Activated CD4-positive, alpha-beta T cell treated with anti-CD3 and anti-CD28 coated beads for 36 hours (primary cell): ENCODE measurements at regions of chr3 and their contacts with region 1.

Region 1: DNA sequence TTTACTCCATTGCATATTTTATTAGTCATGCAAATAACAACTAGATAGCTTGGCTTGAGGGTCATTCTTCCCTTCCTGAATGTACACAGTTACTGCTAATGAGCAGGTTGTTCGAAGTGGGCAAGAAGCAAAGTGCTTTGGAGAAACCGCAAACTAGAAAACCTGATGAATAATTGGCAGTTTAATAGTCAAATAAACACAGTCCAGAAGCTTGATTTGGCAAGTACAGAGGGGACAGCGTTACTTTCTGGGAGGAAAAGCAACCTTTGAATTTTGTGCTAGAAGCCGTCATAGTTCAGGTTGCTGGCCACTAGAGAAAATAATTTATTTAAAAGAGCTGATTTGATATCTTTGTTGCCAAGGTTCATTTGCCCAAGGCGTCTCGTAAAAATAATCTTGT is 94.9 kb downstream of the MFSD1 start:
- DNase-seq: no peak
- ATAC-seq: no peak
- H3K4me3 Mint-ChIP-seq: no peak overlapping the region
- H3K27ac Mint-ChIP-seq: no peak overlapping the region
- H3K4me1 Mint-ChIP-seq: no peaks in the 10 kb centered on the region
- H3K27me3 Mint-ChIP-seq: no peaks in the 10 kb centered on the region

Region 2: GRCh38 chr3:158260392-158260791 is 636.3 kb before region 1 on chr3:
- CTCF ChIA-PET with region 1: no interaction called
- POLR2A ChIA-PET with region 1: no interaction called
- intact Hi-C with region 1: no loop called
- DNase-seq: no peak
- ATAC-seq: no peak
- H3K4me3 Mint-ChIP-seq: no peak overlapping the region
- H3K27ac Mint-ChIP-seq: no peak overlapping the region
- H3K4me1 Mint-ChIP-seq: no peaks in the 10 kb centered on the region
- H3K27me3 Mint-ChIP-seq: no peaks in the 10 kb centered on the region

Region 3: GRCh38 chr3:158925828-158926494 is 29.2 kb after region 1 on chr3:
- CTCF ChIA-PET with region 1: no interaction called
- POLR2A ChIA-PET with region 1: no interaction called
- intact Hi-C with region 1: loop called in 1 of 2 experiments (anchors 2 kb)
- DNase-seq: no peak
- ATAC-seq: no peak
- H3K4me3 Mint-ChIP-seq: no peak overlapping the region
- H3K27ac Mint-ChIP-seq: no peak overlapping the region
- H3K4me1 Mint-ChIP-seq: no peaks in the 10 kb centered on the region
- H3K27me3 Mint-ChIP-seq: no peaks in the 10 kb centered on the region